Heart right ventricle (tissue), 16 donors: ENCODE measurements at regions of chr4 and their contacts with region 1.

Region 1: DNA sequence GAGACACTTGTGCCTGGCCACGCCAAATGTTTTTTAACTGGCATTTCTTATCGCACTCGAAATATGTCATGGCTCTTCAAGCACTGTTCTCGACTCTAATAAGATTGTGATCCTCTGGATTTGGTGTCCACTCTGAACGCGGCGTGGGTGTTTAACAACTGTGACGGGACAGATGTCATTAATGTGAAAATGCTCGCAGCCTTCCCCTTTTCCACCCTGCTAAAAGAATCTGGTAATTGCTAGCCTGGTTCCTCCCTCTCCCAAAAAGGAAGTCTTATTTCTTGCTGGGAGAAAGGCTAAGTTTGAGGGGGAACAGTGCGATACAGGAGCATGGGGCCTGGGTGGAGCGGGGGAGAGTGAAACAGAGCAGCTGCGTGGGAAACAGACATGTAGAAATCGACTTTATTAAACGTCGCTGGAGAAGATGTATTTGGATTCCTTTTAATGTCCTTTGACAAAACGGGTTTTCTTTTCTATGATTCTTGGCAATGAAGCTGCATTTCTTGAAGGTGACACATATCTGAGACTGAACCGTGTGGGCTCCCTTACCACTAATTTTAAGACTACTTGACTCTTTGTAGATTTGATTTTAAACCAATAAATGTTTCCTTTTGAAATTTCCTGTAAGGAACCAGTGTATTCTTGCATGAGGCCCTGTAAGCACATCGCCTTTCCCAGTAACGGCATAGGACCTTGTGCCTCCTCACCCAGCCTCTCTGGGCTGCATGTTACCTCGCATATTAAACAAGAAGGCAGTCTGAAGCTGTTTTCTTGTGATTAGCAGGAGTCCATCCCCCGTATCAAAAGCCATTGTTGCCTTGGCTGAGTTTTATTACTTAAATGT is 17.8 kb downstream of the TBC1D1 start:
- DNase-seq: peak in 1 of 2 donors; percentile 25
- ATAC-seq: peak; percentile 52 to 73 (median 66)
- H3K4me3 ChIP-seq: peak overlapping the region in 9 of 10 donors; percentile 2 to 38 (median 10)
- H3K27ac ChIP-seq: peak overlapping the region; percentile 55 to 89 (median 79)
- H3K4me1 ChIP-seq: peaks cover 0 to 51% (median 20%) of the 10 kb centered on the region in 9 donors
- H3K27me3 ChIP-seq: no peaks in the 10 kb centered on the region
- CTCF ChIP-seq: no peak

Region 2: DNA sequence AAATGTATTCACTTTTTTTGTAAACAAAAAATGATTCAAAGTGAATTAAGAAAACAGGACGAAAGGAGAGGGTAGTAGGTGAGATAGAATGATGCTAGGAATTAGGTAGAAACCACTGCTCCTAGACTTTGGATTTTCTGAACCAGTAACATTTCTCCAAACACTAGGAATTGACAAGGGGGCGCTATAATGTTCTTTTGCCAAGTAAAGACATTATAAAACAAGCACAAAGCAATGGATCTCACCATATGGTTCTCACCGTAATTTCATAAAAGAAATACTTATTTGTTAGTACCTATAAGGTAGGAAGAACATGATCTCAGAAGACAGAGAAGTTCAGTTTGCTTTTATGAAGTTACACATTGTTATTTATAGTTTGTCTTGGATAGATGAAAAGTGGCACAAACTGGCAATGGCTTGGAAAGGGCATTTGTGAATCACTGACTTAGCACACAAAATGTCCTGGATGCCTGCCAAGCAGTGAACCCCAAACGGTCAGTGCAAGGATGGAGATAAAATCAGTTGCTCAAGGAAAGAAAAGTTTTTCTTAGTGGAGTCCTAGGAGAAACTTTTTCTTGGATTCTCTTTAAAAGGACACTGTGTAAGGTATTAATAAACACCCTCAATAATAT is 25.9 kb before region 1 on chr4:
- intact Hi-C with region 1: no loop called
- DNase-seq: no peak
- ATAC-seq: no peak
- H3K4me3 ChIP-seq: no peak overlapping the region
- H3K27ac ChIP-seq: no peak overlapping the region
- H3K4me1 ChIP-seq: peaks cover 0 to 22% (median 3%) of the 10 kb centered on the region in 9 donors
- H3K27me3 ChIP-seq: no peaks in the 10 kb centered on the region
- CTCF ChIP-seq: no peak

Region 3: GRCh38 chr4:37946503-37947179 is 37.9 kb after region 1 on chr4:
- intact Hi-C with region 1: loop called in 1 of 10 experiments (anchors 5 kb)
- DNase-seq: peak in 1 of 2 donors; percentile 18
- ATAC-seq: peak in 7 of 8 donors; percentile 33 to 61 (median 52)
- H3K4me3 ChIP-seq: no peak overlapping the region
- H3K27ac ChIP-seq: no peak overlapping the region
- H3K4me1 ChIP-seq: peaks cover 0 to 32% (median 20%) of the 10 kb centered on the region in 9 donors
- H3K27me3 ChIP-seq: no peaks in the 10 kb centered on the region
- CTCF ChIP-seq: no peak

Region 4: DNA sequence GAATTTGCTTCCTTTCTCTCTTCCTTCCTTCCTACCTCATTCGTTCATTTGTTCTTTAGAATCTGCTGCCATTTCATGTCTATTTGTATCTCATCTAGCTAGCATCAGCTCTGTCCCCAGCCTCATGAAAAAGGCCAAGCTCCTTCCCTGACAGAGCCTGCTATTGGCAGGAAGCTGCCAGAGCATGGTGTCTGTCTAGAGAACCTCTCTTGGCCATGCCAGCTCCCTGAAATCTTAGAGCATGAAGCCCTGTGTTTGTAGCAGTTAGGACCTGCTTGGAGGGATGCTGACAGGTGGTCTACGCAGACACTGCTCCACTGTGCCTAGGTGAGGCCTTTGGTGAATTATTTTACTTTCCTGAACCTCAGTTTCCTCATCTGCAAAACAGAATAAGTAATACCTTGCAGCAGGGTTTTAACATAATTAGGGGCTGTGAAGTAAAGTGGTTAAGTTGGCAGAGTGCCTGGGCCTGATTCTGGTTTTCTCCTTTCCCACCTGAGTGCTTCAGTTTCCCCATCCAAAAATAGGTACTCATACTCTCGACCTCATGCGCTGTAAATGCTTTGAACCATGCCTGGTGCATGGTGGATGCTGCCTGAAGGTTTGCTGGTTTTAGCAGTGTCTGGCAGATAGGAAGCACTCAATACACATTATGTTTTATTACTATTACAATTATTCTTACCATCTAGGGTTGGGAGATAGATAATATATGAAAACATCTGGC is 56.2 kb after region 1 on chr4:
- intact Hi-C with region 1: loop called in 3 of 10 experiments (anchors 5 kb)
- DNase-seq: no peak
- ATAC-seq: peak in 1 of 8 donors; percentile 20
- H3K4me3 ChIP-seq: no peak overlapping the region
- H3K27ac ChIP-seq: no peak overlapping the region
- H3K4me1 ChIP-seq: peaks cover 0 to 36% (median 10%) of the 10 kb centered on the region in 9 donors
- H3K27me3 ChIP-seq: no peaks in the 10 kb centered on the region
- CTCF ChIP-seq: no peak

Region 5: DNA sequence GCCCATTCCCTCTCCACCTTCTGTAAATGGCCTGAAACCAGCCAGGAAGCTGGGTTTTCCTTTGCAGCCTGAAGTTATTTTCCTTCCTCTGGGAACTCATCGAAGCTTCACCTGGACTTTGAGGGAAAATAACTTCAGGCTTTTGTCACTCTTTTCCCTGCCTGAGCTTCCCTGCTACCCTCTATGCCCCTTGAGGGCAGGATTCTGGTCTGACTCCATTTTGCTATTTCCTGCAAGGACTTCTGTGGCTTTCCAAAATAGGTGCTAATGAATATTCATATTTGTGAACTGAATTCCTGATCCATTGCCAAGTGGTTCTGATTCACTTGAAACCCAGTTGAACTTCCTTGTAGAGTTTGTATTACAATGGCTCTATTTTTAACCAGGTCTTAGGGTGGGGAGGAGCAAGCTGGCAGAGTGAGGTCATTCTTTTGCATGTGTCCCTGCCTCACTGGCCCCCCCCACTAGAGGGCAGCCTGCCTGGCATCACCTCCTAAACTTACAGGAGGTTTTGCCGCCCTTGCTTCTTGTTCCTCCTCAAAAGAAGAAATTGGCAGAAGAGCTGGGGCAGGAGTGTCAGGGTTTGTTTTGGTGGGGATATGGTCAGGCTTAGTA is 61.9 kb after region 1 on chr4:
- intact Hi-C with region 1: loop called in 3 of 10 experiments (anchors 5 kb)
- DNase-seq: peak; percentile 72 to 80
- ATAC-seq: peak; percentile 85 to 97 (median 93)
- H3K4me3 ChIP-seq: no peak overlapping the region
- H3K27ac ChIP-seq: peak overlapping the region in 9 of 10 donors; percentile 56 to 79 (median 68)
- H3K4me1 ChIP-seq: peaks cover 5 to 53% (median 24%) of the 10 kb centered on the region in 9 donors
- H3K27me3 ChIP-seq: no peaks in the 10 kb centered on the region
- CTCF ChIP-seq: peak; percentile 41 to 79 (median 65)